ENCODE measurements at regions of chr7 and their contacts with region 1.

Region 1: DNA sequence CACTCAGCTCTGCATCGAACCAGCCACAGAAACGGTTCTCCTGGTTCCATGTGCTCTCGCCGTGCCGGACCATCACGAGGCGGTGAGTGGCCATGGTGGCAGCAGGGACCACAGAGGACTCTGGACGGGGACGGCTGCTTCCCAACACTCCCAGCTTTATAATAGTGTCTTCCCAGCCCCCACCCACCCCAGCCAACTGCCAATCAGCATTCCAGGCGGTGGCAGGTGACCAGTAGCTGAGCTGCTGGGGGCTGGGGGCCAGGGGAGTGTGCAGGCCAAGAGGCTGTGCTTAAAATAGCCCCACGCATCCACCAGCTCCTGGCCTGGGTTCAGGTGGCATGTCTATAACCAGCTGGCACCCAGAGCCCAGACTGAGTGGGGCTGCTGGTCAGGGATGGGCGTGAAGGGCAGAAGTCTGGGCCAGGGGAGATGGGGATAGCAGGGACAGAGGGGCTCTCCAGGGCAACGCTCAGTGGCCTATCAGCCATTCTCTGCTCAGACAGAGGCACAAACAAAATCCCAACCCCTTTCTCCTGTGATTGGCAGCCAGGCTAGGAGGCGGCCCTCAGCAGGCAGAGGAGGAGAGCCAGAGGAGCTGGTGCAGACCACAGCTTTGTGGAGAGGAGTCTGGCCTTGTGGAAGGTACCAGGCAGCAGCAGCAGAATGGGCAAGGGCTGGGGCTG is at the start of gene PGAM2:
- DNase-seq: no peak
- ATAC-seq: peak; percentile 40
- H3K4me3 ChIP-seq: no peak within 1 kb of the TSS
- H3K4me3 Mint-ChIP-seq: peak within 1 kb of the TSS in 6 of 10 donors; percentile 16 to 51 (median 38)
- H3K27ac ChIP-seq: peak within 1 kb of the TSS; percentile 48
- H3K27ac Mint-ChIP-seq: peak within 1 kb of the TSS in 8 of 9 donors; percentile 40 to 80 (median 58)
- H3K4me1 ChIP-seq: peaks cover 0 to 18% of the 10 kb centered on the region in 2 donors
- H3K4me1 Mint-ChIP-seq: peaks cover 7 to 40% (median 34%) of the 10 kb centered on the region in 7 donors
- H3K27me3 ChIP-seq: no peaks in the 10 kb centered on the region
- H3K27me3 Mint-ChIP-seq: no peaks in the 10 kb centered on the region
- total RNA-seq, gene PGAM2: 0.73 to 3.1 (median 1.8) TPM

Region 2: GRCh38 chr7:44044315-44045225 is 21.0 kb before region 1 on chr7 and contains the start of gene DBNL:
- CTCF ChIA-PET with region 1: interaction called, 3 read pairs
- POLR2A ChIA-PET with region 1: interaction called, 66 read pairs
- intact Hi-C with region 1: no loop called
- DNase-seq: peak; percentile 79 to 96 (median 84)
- ATAC-seq: peak; percentile 68
- H3K4me3 ChIP-seq: peak within 1 kb of the TSS; percentile 87
- H3K4me3 Mint-ChIP-seq: peak within 1 kb of the TSS; percentile 84 to 97 (median 92)
- H3K27ac ChIP-seq: peak within 1 kb of the TSS; percentile 93
- H3K27ac Mint-ChIP-seq: peak within 1 kb of the TSS; percentile 86 to 99 (median 96)
- H3K4me1 ChIP-seq: peaks cover 23 to 41% of the 10 kb centered on the region in 2 donors
- H3K4me1 Mint-ChIP-seq: peaks cover 38 to 60% (median 55%) of the 10 kb centered on the region in 7 donors
- H3K27me3 ChIP-seq: no peaks in the 10 kb centered on the region
- H3K27me3 Mint-ChIP-seq: no peaks in the 10 kb centered on the region
- total RNA-seq, gene DBNL: 112 to 182 (median 164) TPM

Region 3: DNA sequence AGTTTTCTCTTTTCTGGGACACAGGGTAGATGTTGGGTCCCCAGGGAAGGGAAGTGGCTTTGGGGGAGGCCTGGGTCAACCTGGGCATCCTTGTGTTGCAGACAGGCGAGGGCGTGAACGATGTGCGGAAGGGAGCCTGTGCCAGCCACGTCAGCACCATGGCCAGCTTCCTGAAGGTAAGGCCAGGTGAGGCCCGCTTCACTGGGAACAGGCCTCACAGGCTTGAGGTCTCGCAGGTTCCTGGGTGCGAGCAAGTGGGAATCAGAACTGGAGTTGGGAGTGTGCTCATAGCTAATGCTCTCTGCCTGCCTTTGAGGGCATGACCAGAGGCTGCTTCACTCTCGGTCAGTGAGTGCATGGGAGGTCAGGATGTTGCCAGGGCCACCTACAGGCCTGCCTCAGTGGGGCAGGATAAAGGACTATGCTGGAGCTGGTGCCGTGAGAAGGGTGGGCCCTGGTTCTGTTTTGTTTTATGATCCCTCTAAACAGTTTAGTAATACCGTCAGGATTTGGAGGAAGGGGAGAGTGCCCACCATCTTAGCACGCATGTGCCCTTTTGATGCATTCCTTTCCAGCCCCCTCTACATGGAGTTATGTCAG is 12.7 kb before region 1 on chr7:
- CTCF ChIA-PET with region 1: interaction called, 3 read pairs
- POLR2A ChIA-PET with region 1: interaction called, 66 read pairs
- intact Hi-C with region 1: loop called in 1 of 2 experiments (anchors 1 kb)
- DNase-seq: no peak
- ATAC-seq: no peak
- H3K4me3 ChIP-seq: no peak overlapping the region
- H3K4me3 Mint-ChIP-seq: peak overlapping the region in 4 of 10 donors; percentile 33 to 73 (median 68)
- H3K27ac ChIP-seq: peak overlapping the region; percentile 51
- H3K27ac Mint-ChIP-seq: peak overlapping the region in 7 of 9 donors; percentile 72 to 94 (median 86)
- H3K4me1 ChIP-seq: peaks cover 0 to 49% of the 10 kb centered on the region in 2 donors
- H3K4me1 Mint-ChIP-seq: peaks cover 34 to 75% (median 50%) of the 10 kb centered on the region in 7 donors
- H3K27me3 ChIP-seq: no peaks in the 10 kb centered on the region
- H3K27me3 Mint-ChIP-seq: no peaks in the 10 kb centered on the region

Measured in naive thymus-derived CD4-positive, alpha-beta T cell (primary cell).